Activated T-helper 1 cell treated with anti-CD3 and anti-CD28 coated beads, Interleukin-12 subunit alpha, Interleukin-12 subunit beta, Interleukin-2, Interleukin-4 antibody, amounts not matched to agents 30 ng/mL and 10 ng/mL and 1 ng/mL, durations not matched to agents 14 hours and 24 hours and 36 hours (primary cell): ENCODE measurements at regions of chr17 and their contacts with region 1.

Region 1: DNA sequence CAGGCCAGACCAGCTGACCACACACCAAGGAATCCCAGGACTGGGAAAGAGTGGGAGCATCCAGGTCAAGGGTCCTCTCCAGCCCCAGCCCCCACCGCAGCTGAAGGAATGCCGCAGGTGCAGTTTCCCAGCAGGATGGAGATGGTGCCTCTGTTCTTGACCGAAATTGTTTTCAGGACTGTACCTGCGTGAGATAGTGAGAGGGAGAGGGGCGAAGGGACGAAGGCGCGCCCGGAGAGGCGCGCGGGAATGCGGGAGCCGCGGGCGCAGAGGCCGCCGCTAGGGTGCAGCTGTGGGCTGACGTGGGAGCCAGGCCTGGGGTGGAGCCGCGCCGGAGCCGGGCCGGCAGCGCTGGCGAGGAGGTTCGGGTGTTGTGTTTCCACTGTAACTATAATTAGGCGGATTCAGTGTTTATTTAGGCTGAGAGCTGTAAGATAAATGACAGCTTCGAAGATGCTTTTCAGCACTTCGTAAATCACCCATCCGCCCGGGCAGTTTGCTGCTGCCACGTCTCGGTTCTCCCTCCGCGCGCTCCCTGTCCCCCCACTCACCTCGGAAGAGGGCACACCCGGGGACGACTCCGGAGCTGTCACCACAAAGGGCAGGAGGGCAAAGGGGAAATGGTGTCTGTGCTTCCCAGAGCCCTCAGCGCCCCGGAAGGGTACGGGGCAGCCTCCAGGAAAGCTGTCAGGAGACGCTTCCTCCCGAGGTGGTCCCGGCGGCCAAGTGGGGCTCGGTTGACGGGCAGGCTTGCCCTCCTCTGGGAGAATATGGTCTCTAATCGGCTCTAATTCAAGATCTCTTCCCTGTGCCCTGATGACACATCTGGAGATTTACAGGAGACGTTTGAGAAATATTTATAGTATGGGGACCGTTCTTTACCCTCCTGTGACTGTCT is 38.2 kb downstream of the HOXB1 start:
- DNase-seq: peak; percentile 64
- H3K4me3 Mint-ChIP-seq: peak overlapping the region; percentile 45
- H3K27ac Mint-ChIP-seq: peak overlapping the region; percentile 88
- H3K4me1 Mint-ChIP-seq: peaks cover 54% of the 10 kb centered on the region
- H3K27me3 Mint-ChIP-seq: peaks cover 19% of the 10 kb centered on the region

Region 2: GRCh38 chr17:48429638-48430586 is 62.7 kb before region 1 on chr17 and contains the start of gene SKAP1:
- intact Hi-C with region 1: loop called (anchors 1 kb)
- DNase-seq: peak; percentile 68
- H3K4me3 Mint-ChIP-seq: peak within 1 kb of the TSS; percentile 98
- H3K27ac Mint-ChIP-seq: peak within 1 kb of the TSS; percentile 99
- H3K4me1 Mint-ChIP-seq: peaks cover 72% of the 10 kb centered on the region
- H3K27me3 Mint-ChIP-seq: peaks cover 1% of the 10 kb centered on the region
- total RNA-seq, gene SKAP1: 48.7 and 51.9 TPM in 2 replicates

Region 3: GRCh38 chr17:48505787-48506645 is 13.4 kb after region 1 on chr17:
- intact Hi-C with region 1: loop called (anchors 1 kb)
- DNase-seq: peak; percentile 70
- H3K4me3 Mint-ChIP-seq: peak overlapping the region; percentile 60
- H3K27ac Mint-ChIP-seq: peak overlapping the region; percentile 84
- H3K4me1 Mint-ChIP-seq: peaks cover 49% of the 10 kb centered on the region
- H3K27me3 Mint-ChIP-seq: peaks cover 8% of the 10 kb centered on the region

Region 4: DNA sequence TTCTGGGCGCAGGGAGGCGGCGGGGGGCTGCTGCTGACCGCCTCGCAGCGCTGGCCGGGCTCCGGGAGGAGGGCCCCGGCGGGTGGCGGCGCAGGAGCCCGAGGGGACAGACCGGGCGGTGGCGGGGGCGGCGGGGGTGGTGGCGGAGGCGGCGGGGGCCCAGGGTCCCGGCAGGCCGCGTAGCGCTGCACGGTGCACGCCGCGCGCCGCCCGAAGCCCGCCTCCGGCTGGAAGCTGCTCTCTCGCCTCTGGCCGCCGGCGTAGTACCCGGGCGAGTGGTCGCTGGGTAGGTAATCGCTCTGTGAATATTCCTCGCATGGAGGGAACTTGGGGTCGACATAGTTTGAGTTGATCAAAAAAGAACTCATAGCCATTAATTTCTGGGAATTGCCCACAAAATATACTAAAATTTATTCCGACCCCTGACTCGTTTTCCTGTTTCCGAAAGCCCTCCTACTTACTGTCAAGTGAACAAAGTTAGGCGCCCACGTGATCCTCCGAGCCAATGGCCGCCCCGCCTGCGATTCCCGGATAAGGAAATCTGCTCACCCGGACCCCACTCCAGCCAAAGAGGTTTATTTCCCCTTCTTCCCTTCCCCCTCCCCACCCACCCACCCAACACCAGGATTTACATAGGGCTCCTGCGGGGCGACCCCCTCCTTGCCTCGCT is 85.4 kb after region 1 on chr17 and contains the start of gene HOXB4:
- intact Hi-C with region 1: loop called (anchors 1 kb)
- DNase-seq: peak; percentile 68
- H3K4me3 Mint-ChIP-seq: peak within 1 kb of the TSS; percentile 91
- H3K27ac Mint-ChIP-seq: peak within 1 kb of the TSS; percentile 86
- H3K4me1 Mint-ChIP-seq: peaks cover 66% of the 10 kb centered on the region
- H3K27me3 Mint-ChIP-seq: peaks cover 37% of the 10 kb centered on the region
- total RNA-seq, gene HOXB4: 3.8 and 4.2 TPM in 2 replicates